Gastrocnemius medialis (tissue), 4 donors: ENCODE measurements at regions of chr20 and their contacts with region 1.

Region 1: DNA sequence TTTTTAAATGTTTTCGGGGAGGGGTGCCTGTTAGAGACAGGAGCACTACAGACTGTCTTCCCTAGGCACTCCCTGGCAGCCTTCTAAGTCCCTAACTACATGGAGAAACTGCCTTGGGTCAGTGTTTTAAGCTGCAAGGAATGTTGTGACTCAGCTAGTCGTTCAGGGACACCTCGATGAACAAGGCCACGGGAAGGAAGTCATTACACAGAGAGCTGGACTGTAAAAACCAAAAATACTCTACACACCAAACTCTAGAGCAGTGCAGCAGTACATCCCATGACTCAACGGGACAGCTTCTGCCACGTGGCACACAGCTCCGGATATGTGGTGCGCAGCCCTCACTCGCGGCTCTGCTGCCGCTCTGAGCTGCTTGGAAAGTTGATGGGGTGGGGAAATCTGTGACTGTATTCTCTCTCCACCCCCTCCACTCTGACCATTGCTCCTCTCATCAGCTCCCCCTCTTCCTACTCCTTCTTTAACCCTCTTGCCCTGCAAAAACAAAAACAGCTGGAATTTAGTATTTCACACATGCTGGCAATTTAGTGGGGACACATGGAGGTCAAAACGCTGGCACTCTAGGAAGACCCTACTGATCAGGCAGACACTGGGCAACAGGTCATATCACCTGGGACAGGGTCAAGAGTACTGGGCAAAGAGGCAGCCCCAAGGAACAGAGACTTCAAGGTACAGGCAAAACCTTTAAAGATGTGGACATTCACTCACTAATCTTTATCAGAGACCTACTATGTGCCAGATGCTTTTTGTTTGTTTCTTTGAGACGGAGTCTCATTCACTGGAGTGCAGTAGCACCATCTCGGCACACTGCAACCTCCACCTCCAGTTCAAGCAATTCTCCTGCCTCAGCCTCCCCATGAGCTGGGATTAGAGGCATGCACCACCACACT is 10.9 kb upstream of the LPIN3 start:
- DNase-seq: peak; percentile 89 to 90
- ATAC-seq: peak; percentile 99 to 100
- H3K4me3 ChIP-seq: peak overlapping the region in 3 of 4 donors; percentile 8 to 32 (median 16)
- H3K27ac ChIP-seq: peak overlapping the region; percentile 80 to 93 (median 89)
- H3K4me1 ChIP-seq: peaks cover 15 to 17% of the 10 kb centered on the region in 2 donors
- H3K27me3 ChIP-seq: no peaks in the 10 kb centered on the region
- CTCF ChIP-seq: no peak
- POLR2A ChIP-seq: peak; percentile 40 to 57

Region 2: GRCh38 chr20:41110930-41111577 is 218.6 kb before region 1 on chr20:
- in situ Hi-C with region 1: no loop called
- intact Hi-C with region 1: no loop called
- DNase-seq: no peak
- ATAC-seq: no peak
- H3K4me3 ChIP-seq: no peak overlapping the region
- H3K27ac ChIP-seq: no peak overlapping the region
- H3K4me1 ChIP-seq: no peaks in the 10 kb centered on the region
- H3K27me3 ChIP-seq: no peaks in the 10 kb centered on the region
- CTCF ChIP-seq: no peak
- POLR2A ChIP-seq: no peak

Region 3: GRCh38 chr20:41232973-41233926 is 96.4 kb before region 1 on chr20:
- in situ Hi-C with region 1: loop called in 1 of 4 experiments (anchors 10 kb)
- intact Hi-C with region 1: loop called (anchors 2 kb)
- DNase-seq: no peak
- ATAC-seq: peak; percentile 54 to 72
- H3K4me3 ChIP-seq: peak overlapping the region in 3 of 4 donors; percentile 20 to 39 (median 28)
- H3K27ac ChIP-seq: peak overlapping the region; percentile 78 to 91 (median 86)
- H3K4me1 ChIP-seq: peaks cover 65% of the 10 kb centered on the region in 2 donors
- H3K27me3 ChIP-seq: no peaks in the 10 kb centered on the region
- CTCF ChIP-seq: no peak
- POLR2A ChIP-seq: no peak

Region 4: DNA sequence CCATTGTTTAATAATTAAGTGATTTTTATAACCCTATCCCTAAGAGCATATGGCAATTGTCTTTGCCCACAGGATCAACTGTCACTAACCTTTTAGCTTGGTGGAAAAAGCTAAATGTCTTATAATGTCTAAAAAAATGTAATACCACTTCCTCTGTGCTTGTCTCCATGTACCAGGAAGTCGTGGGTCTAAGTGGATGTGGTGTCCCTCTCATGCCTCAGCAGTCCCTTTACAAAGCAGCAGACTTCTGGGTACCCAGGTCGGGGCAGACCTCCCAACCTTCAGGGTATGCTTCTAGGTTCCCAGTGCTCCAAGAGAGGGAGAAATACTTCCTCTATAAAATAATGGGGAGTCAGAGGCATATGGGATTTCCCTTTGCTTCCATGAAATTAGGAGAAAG is 86.9 kb before region 1 on chr20:
- in situ Hi-C with region 1: loop called in 2 of 4 experiments (anchors 5 to 10 kb)
- intact Hi-C with region 1: no loop called
- DNase-seq: no peak
- ATAC-seq: no peak
- H3K4me3 ChIP-seq: no peak overlapping the region
- H3K27ac ChIP-seq: peak overlapping the region in 1 of 4 donors; percentile 2
- H3K4me1 ChIP-seq: peaks cover 44 to 51% of the 10 kb centered on the region in 2 donors
- H3K27me3 ChIP-seq: no peaks in the 10 kb centered on the region
- CTCF ChIP-seq: no peak
- POLR2A ChIP-seq: no peak

Region 5: GRCh38 chr20:41317536-41318270 is 12.0 kb before region 1 on chr20 and contains the start of gene ZHX3:
- in situ Hi-C with region 1: no loop called
- intact Hi-C with region 1: loop called (anchors 1 kb)
- DNase-seq: peak; percentile 92 to 95
- ATAC-seq: peak; percentile 89
- H3K4me3 ChIP-seq: peak within 1 kb of the TSS; percentile 77 to 95 (median 80)
- H3K27ac ChIP-seq: peak within 1 kb of the TSS; percentile 84 to 96 (median 91)
- H3K4me1 ChIP-seq: peaks cover 37 to 40% of the 10 kb centered on the region in 2 donors
- H3K27me3 ChIP-seq: no peaks in the 10 kb centered on the region
- CTCF ChIP-seq: no peak
- POLR2A ChIP-seq: peak; percentile 70 to 85
- total RNA-seq, gene ZHX3: 20.1 to 30.0 (median 25.9) TPM